ENCODE measurements at regions of chr11 and their contacts with region 1.

Region 1: DNA sequence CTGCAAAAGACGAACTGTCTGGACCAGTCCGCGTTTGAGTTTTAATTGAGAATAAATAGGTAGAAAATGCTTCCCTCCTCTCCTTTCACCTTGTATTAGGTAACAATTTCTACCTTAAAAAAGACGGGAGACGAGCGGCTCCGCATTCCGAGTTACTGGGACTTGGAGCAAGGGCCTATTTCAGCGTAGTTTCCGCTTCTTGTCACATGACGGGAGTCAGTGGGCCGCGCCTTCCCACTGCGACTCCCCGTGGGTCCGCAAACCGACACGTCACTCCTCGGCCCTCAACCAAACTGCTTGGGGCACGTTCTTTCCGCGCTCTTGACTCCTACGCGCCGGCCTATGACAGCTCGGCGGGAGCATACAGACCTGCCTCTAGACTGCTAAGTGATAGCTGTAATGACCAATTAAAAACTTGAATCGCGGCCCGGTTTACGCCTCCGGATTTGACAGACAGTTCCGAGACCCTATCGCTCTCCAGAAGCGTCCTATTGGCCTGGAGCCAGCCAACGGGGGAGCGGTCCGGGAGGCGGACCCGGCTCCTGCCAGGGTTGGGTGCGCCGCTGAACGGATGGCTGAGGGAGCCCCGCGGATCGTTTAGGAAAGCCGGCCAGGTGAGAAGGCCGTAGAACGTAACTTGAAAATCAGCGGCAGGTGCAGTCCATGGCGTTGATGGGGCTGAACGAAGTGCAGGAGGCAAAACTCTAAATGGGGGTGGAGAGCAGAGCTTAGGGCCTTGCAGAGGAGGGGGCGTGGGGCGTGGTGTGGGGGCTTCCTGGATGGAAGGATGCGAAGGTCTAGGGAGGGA is at the start of gene STT3A:
- DNase-seq: peak; percentile 100
- ATAC-seq: peak; percentile 93
- H3K4me3 ChIP-seq: peak within 1 kb of the TSS; percentile 76
- H3K27ac ChIP-seq: peak within 1 kb of the TSS; percentile 83
- H3K4me1 ChIP-seq: peaks cover 28% of the 10 kb centered on the region
- H3K27me3 ChIP-seq: no peaks in the 10 kb centered on the region
- CTCF ChIP-seq: no peak
- total RNA-seq, gene STT3A: 160 and 182 TPM in 2 replicates

Region 2: DNA sequence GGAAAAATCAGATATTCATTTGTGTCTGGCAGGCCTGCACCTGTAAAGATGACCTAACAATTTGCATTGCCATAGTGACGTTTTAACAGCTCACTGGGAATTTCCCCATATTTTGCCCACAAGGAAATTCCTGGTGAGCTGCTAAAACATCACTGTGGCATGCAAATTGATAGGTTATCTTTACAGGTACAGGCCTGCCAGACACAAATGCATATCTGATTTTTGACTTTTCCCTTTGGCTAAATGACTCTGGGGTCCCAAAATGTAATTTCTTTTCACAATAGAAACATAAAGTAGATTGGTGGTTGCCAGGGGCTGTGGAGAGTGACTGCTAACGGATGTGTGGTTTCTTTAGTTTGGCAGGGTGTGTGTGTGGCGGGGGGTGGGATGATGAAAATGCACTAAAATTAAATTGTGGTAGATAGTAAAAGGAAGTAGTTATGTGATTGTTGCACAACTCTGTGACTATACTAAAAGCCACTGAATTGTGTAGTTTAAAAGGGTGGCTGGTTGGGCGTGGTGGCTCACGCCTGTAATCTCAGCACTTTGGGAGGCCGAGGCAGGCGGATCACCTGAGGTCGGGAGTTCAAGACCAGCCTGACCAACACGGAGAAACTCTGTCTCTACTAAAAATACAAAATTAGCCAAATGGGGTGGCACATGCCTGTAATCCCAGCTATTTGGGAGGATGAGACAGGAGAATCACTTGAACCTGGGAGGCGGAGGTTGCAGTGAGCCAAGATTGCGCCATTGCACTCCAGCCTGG is 78.0 kb before region 1 on chr11:
- CTCF ChIA-PET with region 1: no interaction called
- POLR2A ChIA-PET with region 1: no interaction called
- intact Hi-C with region 1: no loop called
- DNase-seq: peak; percentile 65
- ATAC-seq: peak; percentile 43
- H3K4me3 ChIP-seq: no peak overlapping the region
- H3K27ac ChIP-seq: peak overlapping the region; percentile 36; the same call in 1 of the 2 replicates
- H3K4me1 ChIP-seq: 0 out of 2 replicates have a peak, but pooled peaks cover 5% of the 10 kb centered on the region
- H3K27me3 ChIP-seq: no peaks in the 10 kb centered on the region
- CTCF ChIP-seq: no peak

Region 3: GRCh38 chr11:125568970-125569914 is 23.3 kb before region 1 on chr11 and contains the start of gene EI24:
- CTCF ChIA-PET with region 1: no interaction called
- POLR2A ChIA-PET with region 1: no interaction called
- intact Hi-C with region 1: loop called (anchors 1 kb)
- DNase-seq: peak; percentile 97
- ATAC-seq: peak; percentile 98
- H3K4me3 ChIP-seq: peak within 1 kb of the TSS; percentile 90
- H3K27ac ChIP-seq: peak within 1 kb of the TSS; percentile 48
- H3K4me1 ChIP-seq: peaks cover 14% of the 10 kb centered on the region
- H3K27me3 ChIP-seq: no peaks in the 10 kb centered on the region
- CTCF ChIP-seq: peak; percentile 59
- total RNA-seq, gene EI24: 154 and 166 TPM in 2 replicates

Region 4: GRCh38 chr11:125579811-125580210 is 12.7 kb before region 1 on chr11:
- CTCF ChIA-PET with region 1: no interaction called
- POLR2A ChIA-PET with region 1: no interaction called
- intact Hi-C with region 1: no loop called
- DNase-seq: no peak
- ATAC-seq: no peak
- H3K4me3 ChIP-seq: no peak overlapping the region
- H3K27ac ChIP-seq: no peak overlapping the region
- H3K4me1 ChIP-seq: no peaks in the 10 kb centered on the region
- H3K27me3 ChIP-seq: no peaks in the 10 kb centered on the region
- CTCF ChIP-seq: no peak

Region 5: GRCh38 chr11:125625630-125626287 is 33.2 kb after region 1 on chr11:
- CTCF ChIA-PET with region 1: no interaction called
- POLR2A ChIA-PET with region 1: no interaction called
- intact Hi-C with region 1: loop called (anchors 1 kb)
- DNase-seq: peak; percentile 96
- ATAC-seq: peak; percentile 65
- H3K4me3 ChIP-seq: peak overlapping the region; percentile 80
- H3K27ac ChIP-seq: peak overlapping the region; percentile 89
- H3K4me1 ChIP-seq: peaks cover 34% of the 10 kb centered on the region
- H3K27me3 ChIP-seq: no peaks in the 10 kb centered on the region
- CTCF ChIP-seq: no peak

Region 6: GRCh38 chr11:125887373-125888324 is 295.1 kb after region 1 on chr11 and contains the start of gene HYLS1:
- CTCF ChIA-PET with region 1: no interaction called
- POLR2A ChIA-PET with region 1: no interaction called
- intact Hi-C with region 1: loop called (anchors 5 kb)
- DNase-seq: peak; percentile 99
- ATAC-seq: peak; percentile 83
- H3K4me3 ChIP-seq: peak within 1 kb of the TSS; percentile 83
- H3K27ac ChIP-seq: peak within 1 kb of the TSS; percentile 87
- H3K4me1 ChIP-seq: peaks cover 59% of the 10 kb centered on the region
- H3K27me3 ChIP-seq: no peaks in the 10 kb centered on the region
- CTCF ChIP-seq: peak; percentile 39
- total RNA-seq, gene HYLS1: 16.4 and 23.5 TPM in 2 replicates

Measured in PC-3 (cell line).